Astrocyte of the cerebellum (primary cell): ENCODE measurements at regions of chr3 and their contacts with region 1.

Region 1: GRCh38 chr3:29764603-29765254 is 483.9 kb downstream of the RBMS3 start:
- DNase-seq: peak; percentile 89
- H3K4me3 ChIP-seq: no peak overlapping the region
- CTCF ChIP-seq: peak; percentile 69

Region 2: GRCh38 chr3:28901018-28901417 is 863.7 kb before region 1 on chr3:
- in situ Hi-C with region 1: loop called (anchors 5 kb)
- DNase-seq: no peak
- H3K4me3 ChIP-seq: no peak overlapping the region
- CTCF ChIP-seq: no peak

Region 3: DNA sequence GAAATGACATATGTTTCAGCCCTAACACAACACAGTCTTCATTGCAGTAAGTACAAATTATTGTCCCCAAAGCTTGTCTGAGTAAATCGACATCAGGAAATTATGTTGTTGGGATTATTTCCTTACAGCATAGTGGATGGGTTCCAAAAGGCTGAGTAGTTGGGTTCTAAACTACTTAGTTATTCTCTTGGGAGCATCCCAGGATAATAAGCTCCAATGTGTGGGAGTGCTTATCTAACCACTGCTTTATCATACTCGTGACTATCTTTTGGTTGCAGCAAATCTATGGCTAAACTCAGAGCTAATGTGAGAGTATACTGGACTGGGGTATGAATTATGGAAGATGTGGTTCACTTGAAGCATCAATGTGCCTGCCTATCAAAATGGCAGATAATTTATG is 355.3 kb before region 1 on chr3:
- in situ Hi-C with region 1: no loop called
- DNase-seq: no peak
- H3K4me3 ChIP-seq: no peak overlapping the region
- CTCF ChIP-seq: no peak

Region 4: GRCh38 chr3:30421266-30421665 is 656.5 kb after region 1 on chr3:
- in situ Hi-C with region 1: no loop called
- DNase-seq: no peak
- H3K4me3 ChIP-seq: no peak overlapping the region
- CTCF ChIP-seq: no peak